ENCODE measurements at regions of chr1 and their contacts with region 1.

Region 1: GRCh38 chr1:222643938-222644635 is 26.2 kb downstream of the MIA3 start:
- DNase-seq: peak; percentile 93 to 99 (median 98)
- ATAC-seq: peak; percentile 87
- H3K4me3 ChIP-seq: peak overlapping the region; percentile 90 to 96
- H3K4me3 Mint-ChIP-seq: peak overlapping the region; percentile 96
- H3K27ac ChIP-seq: peak overlapping the region; percentile 96 to 99
- H3K27ac Mint-ChIP-seq: peak overlapping the region; percentile 99
- H3K4me1 ChIP-seq: peaks cover 29% of the 10 kb centered on the region
- H3K4me1 Mint-ChIP-seq: peaks cover 38% of the 10 kb centered on the region
- H3K27me3 ChIP-seq: no peaks in the 10 kb centered on the region
- H3K27me3 Mint-ChIP-seq: no peaks in the 10 kb centered on the region
- CTCF ChIP-seq: no peak

Region 2: DNA sequence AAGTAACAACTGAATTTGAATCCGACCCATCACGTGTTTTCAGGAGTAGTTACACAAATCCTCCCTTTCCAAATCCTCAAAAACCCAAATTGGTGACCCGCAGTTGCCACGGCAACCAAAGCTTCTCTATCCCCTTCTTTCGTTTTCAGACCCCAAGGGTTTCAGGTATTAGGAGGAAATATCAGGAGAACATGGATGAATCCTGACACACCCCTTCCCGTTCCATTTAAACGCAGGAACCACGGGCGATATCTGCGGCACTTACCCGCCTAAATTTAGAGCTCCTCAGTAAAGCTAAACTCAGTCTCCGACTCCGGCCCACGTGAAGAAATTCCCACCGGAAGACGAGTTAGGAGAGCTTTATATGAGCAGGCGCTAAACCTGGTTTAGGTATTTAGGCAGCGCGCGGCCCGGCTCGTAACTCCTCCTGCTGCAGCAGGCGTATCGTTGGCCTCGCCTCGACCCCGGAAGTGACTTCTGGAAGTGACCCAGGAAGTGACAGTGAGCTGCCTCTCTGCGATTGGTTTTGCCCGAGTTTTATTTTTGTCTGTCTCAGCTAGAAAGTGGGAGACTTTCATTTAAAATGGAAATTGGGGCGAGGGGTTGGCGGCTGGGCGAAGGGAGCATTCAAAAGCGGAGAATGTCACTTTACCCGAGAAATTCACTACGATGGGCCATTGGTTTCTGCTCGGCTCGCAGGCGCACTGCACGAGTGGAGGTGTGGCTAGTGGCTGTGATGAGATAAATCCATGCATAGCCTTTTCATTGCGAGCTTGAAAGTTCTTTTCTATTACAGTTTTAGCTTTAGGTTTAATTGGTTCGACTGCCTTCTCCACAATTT is 54.4 kb before region 1 on chr1 and contains the start of gene TAF1A:
- CTCF ChIA-PET with region 1: no interaction called
- POLR2A ChIA-PET with region 1: interaction called, 7 read pairs
- intact Hi-C with region 1: loop called in 1 of 2 experiments (anchors 1 kb)
- DNase-seq: peak; percentile 69 to 93 (median 86)
- ATAC-seq: peak; percentile 98
- H3K4me3 ChIP-seq: peak within 1 kb of the TSS; percentile 68 to 77
- H3K4me3 Mint-ChIP-seq: peak within 1 kb of the TSS; percentile 98
- H3K27ac ChIP-seq: peak within 1 kb of the TSS; percentile 85 to 87
- H3K27ac Mint-ChIP-seq: peak within 1 kb of the TSS; percentile 99
- H3K4me1 ChIP-seq: peaks cover 11% of the 10 kb centered on the region
- H3K4me1 Mint-ChIP-seq: peaks cover 52% of the 10 kb centered on the region
- H3K27me3 ChIP-seq: no peaks in the 10 kb centered on the region
- H3K27me3 Mint-ChIP-seq: no peaks in the 10 kb centered on the region
- CTCF ChIP-seq: no peak
- total RNA-seq, gene TAF1A: 5.3 to 5.6 TPM

Region 3: GRCh38 chr1:222617367-222617951 is 26.6 kb before region 1 on chr1:
- CTCF ChIA-PET with region 1: interaction called, 3 read pairs
- POLR2A ChIA-PET with region 1: interaction called, 13 read pairs
- intact Hi-C with region 1: loop called (anchors 1 to 2 kb)
- DNase-seq: peak; percentile 88 to 99 (median 93)
- ATAC-seq: peak; percentile 91
- H3K4me3 ChIP-seq: peak overlapping the region; percentile 67 to 68
- H3K4me3 Mint-ChIP-seq: peak overlapping the region; percentile 93
- H3K27ac ChIP-seq: peak overlapping the region; percentile 83
- H3K27ac Mint-ChIP-seq: peak overlapping the region; percentile 98
- H3K4me1 ChIP-seq: peaks cover 20% of the 10 kb centered on the region
- H3K4me1 Mint-ChIP-seq: peaks cover 31% of the 10 kb centered on the region
- H3K27me3 ChIP-seq: peaks cover 0 to 3% of the 10 kb centered on the region in 2 experiments
- H3K27me3 Mint-ChIP-seq: peaks cover 16% of the 10 kb centered on the region
- CTCF ChIP-seq: no peak

Region 4: GRCh38 chr1:222654849-222655248 is 10.8 kb after region 1 on chr1:
- CTCF ChIA-PET with region 1: interaction called, 6 read pairs
- POLR2A ChIA-PET with region 1: interaction called, 18 read pairs
- intact Hi-C with region 1: loop called (anchors 1 kb)
- DNase-seq: peak; percentile 53 to 95 (median 71)
- ATAC-seq: peak; percentile 98
- H3K4me3 ChIP-seq: no peak overlapping the region
- H3K4me3 Mint-ChIP-seq: peak overlapping the region; percentile 54
- H3K27ac ChIP-seq: peak overlapping the region; percentile 70 to 89
- H3K27ac Mint-ChIP-seq: peak overlapping the region; percentile 96
- H3K4me1 ChIP-seq: peaks cover 43% of the 10 kb centered on the region
- H3K4me1 Mint-ChIP-seq: peaks cover 61% of the 10 kb centered on the region
- H3K27me3 ChIP-seq: no peaks in the 10 kb centered on the region
- H3K27me3 Mint-ChIP-seq: no peaks in the 10 kb centered on the region
- CTCF ChIP-seq: peak; percentile 40

Region 5: DNA sequence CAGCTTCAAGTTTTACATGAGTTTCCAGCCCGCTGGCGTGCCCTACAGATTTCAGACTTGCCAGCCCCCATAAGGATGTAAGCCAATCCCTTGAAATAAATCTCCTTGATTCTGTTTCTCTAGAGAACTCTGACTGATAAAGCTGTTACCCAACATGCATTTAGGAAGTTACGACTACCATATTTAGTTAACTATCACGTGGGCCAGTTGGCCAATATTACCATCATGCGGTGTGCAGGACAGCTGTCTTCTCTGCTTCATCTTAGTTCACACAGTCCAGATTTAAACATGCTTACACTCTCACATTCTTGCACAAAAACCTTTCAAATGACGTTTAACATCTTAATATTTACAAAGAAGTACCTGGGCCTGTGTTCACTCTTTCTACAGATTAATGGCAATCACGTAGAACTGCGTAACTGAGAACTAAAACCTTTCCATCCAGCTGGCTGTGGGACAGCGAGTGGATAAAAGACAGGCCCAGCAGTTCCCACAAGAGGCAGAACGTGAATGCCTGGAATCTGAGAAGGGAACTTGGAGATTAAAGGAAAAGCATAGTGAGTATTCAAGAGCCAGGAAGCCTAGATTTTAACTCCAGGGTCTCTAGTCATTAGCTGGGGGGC is 113.7 kb after region 1 on chr1:
- CTCF ChIA-PET with region 1: no interaction called
- POLR2A ChIA-PET with region 1: no interaction called
- intact Hi-C with region 1: no loop called
- DNase-seq: no peak
- ATAC-seq: no peak
- H3K4me3 ChIP-seq: no peak overlapping the region
- H3K4me3 Mint-ChIP-seq: no peak overlapping the region
- H3K27ac ChIP-seq: no peak overlapping the region
- H3K27ac Mint-ChIP-seq: no peak overlapping the region
- H3K4me1 ChIP-seq: no peaks in the 10 kb centered on the region
- H3K4me1 Mint-ChIP-seq: no peaks in the 10 kb centered on the region
- H3K27me3 ChIP-seq: no peaks in the 10 kb centered on the region
- H3K27me3 Mint-ChIP-seq: peaks cover 12% of the 10 kb centered on the region
- CTCF ChIP-seq: no peak

Region 6: GRCh38 chr1:222814536-222815439 is 170.7 kb after region 1 on chr1 and contains the start of gene DISP1:
- CTCF ChIA-PET with region 1: no interaction called
- POLR2A ChIA-PET with region 1: interaction called, 3 read pairs
- intact Hi-C with region 1: loop called in 1 of 2 experiments (anchors 10 kb)
- DNase-seq: peak; percentile 35 to 86 (median 66)
- ATAC-seq: peak; percentile 79
- H3K4me3 ChIP-seq: peak within 1 kb of the TSS; percentile 91 to 98
- H3K4me3 Mint-ChIP-seq: peak within 1 kb of the TSS; percentile 92
- H3K27ac ChIP-seq: peak within 1 kb of the TSS; percentile 75 to 83
- H3K27ac Mint-ChIP-seq: peak within 1 kb of the TSS; percentile 92
- H3K4me1 ChIP-seq: peaks cover 13% of the 10 kb centered on the region
- H3K4me1 Mint-ChIP-seq: peaks cover 25% of the 10 kb centered on the region
- H3K27me3 ChIP-seq: no peaks in the 10 kb centered on the region
- H3K27me3 Mint-ChIP-seq: no peaks in the 10 kb centered on the region
- CTCF ChIP-seq: no peak
- total RNA-seq, gene DISP1: 0.73 to 1.0 TPM

Region 7: DNA sequence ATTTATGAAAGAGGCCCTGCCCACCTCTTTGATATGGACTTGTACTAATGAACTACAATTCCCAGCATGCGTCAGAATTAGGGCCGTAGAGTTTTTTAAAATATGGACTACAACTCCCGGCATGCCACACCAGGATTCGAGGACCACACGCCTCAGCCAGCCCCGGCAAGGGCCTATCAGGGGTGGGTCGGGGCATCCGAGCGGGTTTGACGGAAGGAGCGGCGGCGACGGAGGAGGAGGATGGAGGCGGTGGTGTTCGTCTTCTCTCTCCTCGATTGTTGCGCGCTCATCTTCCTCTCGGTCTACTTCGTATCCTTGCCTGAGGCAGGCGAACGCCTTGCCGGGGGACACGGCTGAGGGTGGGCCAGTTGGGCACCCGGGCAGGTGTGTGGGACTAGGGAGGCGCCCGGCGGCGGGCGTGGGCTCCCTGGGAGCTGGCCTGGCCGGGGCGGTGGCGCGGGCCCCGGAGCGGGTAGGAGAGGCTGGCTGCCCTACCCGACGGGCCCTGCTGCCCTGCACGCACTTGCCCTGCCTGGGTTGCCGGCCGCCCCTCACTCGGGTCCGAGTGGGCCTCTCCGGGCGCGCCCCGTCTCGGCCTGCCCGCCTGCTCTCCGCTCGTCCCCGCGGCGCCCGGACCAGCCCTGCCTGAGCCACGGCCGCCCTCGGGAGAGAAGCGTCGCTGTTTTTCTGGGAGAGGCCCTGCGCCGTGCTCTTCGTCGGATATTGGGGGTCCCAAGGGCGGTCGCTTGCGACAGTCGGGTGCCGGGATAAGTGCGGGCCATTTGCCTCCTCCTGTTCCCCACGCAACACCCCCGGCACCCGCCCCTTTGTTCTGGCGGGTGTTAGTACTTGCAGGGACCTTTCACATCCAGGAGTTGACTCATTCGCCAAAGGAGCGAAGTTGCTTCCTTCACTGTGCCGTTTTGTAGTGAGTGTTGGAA is 1712.9 kb after region 1 on chr1 and contains the start of gene CNIH4:
- CTCF ChIA-PET with region 1: no interaction called
- POLR2A ChIA-PET with region 1: no interaction called
- intact Hi-C with region 1: loop called in 1 of 2 experiments (anchors 10 kb)
- DNase-seq: peak; percentile 81 to 97 (median 90)
- ATAC-seq: peak; percentile 99
- H3K4me3 ChIP-seq: peak within 1 kb of the TSS; percentile 60 to 78
- H3K4me3 Mint-ChIP-seq: peak within 1 kb of the TSS; percentile 87
- H3K27ac ChIP-seq: peak within 1 kb of the TSS; percentile 63 to 74
- H3K27ac Mint-ChIP-seq: peak within 1 kb of the TSS; percentile 92
- H3K4me1 ChIP-seq: peaks cover 33% of the 10 kb centered on the region
- H3K4me1 Mint-ChIP-seq: peaks cover 53% of the 10 kb centered on the region
- H3K27me3 ChIP-seq: no peaks in the 10 kb centered on the region
- H3K27me3 Mint-ChIP-seq: no peaks in the 10 kb centered on the region
- CTCF ChIP-seq: no peak
- total RNA-seq, gene CNIH4: 26.5 to 28.6 TPM